Colonic mucosa (tissue), 4 donors: ENCODE measurements at regions of chr10 and their contacts with region 1.

Region 1: DNA sequence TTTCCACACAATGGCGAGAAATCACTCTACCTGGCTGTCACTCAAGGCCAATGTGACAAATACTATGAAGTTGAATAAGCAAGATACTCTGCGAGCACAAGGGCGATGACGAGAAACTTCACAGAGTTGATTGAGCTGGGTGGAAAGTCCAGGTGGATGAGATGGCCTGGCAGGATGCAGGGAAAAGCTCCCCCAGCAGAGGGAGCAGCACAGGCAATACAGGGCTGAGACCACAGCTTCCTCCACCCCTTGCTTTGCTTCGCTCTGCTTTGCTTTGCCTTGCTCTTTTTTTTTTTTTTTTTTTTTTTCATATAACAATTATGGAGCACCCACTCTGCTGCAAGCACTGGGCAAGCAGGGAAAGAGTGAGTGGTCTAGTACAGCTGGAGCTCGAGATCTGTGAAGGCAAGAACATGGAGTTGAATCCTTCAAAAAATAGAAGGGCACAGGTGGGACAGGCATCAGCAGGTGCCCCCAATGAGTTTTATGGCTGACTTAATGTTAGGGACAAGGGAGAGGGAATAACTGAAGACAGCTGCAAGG is 88.3 kb downstream of the CABCOCO1 start:
- DNase-seq: peak; percentile 89
- H3K4me3 ChIP-seq: no peak overlapping the region
- H3K27ac ChIP-seq: peak overlapping the region; percentile 48
- H3K4me1 ChIP-seq: peaks cover 7% of the 10 kb centered on the region
- H3K27me3 ChIP-seq: no peaks in the 10 kb centered on the region
- CTCF ChIP-seq: peak; percentile 69

Region 2: GRCh38 chr10:61835069-61835945 is 84.3 kb after region 1 on chr10:
- intact Hi-C with region 1: loop called (anchors 5 kb)
- DNase-seq: no peak
- H3K4me3 ChIP-seq: no peak overlapping the region
- H3K27ac ChIP-seq: peak overlapping the region; percentile 50
- H3K4me1 ChIP-seq: no peaks in the 10 kb centered on the region
- H3K27me3 ChIP-seq: no peaks in the 10 kb centered on the region
- CTCF ChIP-seq: peak; percentile 37